ENCODE measurements at regions of chr5 and their contacts with region 1.

Region 1: GRCh38 chr5:170338933-170339779 is 41.6 kb upstream of the LCP2 start:
- DNase-seq: peak in 8 of 9 donors; percentile 53 to 75 (median 68)
- ATAC-seq: peak; percentile 90
- H3K4me3 ChIP-seq: no peak overlapping the region
- H3K4me3 Mint-ChIP-seq: peak overlapping the region in 3 of 10 donors; percentile 30 to 48 (median 42)
- H3K27ac ChIP-seq: peak overlapping the region; percentile 15
- H3K27ac Mint-ChIP-seq: peak overlapping the region in 8 of 9 donors; percentile 75 to 98 (median 86)
- H3K4me1 ChIP-seq: peaks cover 27 to 39% of the 10 kb centered on the region in 2 donors
- H3K4me1 Mint-ChIP-seq: peaks cover 0 to 48% (median 36%) of the 10 kb centered on the region in 7 donors
- H3K27me3 ChIP-seq: no peaks in the 10 kb centered on the region
- H3K27me3 Mint-ChIP-seq: peaks cover 0 to under 1% (median 0%) of the 10 kb centered on the region in 5 donors

Region 2: DNA sequence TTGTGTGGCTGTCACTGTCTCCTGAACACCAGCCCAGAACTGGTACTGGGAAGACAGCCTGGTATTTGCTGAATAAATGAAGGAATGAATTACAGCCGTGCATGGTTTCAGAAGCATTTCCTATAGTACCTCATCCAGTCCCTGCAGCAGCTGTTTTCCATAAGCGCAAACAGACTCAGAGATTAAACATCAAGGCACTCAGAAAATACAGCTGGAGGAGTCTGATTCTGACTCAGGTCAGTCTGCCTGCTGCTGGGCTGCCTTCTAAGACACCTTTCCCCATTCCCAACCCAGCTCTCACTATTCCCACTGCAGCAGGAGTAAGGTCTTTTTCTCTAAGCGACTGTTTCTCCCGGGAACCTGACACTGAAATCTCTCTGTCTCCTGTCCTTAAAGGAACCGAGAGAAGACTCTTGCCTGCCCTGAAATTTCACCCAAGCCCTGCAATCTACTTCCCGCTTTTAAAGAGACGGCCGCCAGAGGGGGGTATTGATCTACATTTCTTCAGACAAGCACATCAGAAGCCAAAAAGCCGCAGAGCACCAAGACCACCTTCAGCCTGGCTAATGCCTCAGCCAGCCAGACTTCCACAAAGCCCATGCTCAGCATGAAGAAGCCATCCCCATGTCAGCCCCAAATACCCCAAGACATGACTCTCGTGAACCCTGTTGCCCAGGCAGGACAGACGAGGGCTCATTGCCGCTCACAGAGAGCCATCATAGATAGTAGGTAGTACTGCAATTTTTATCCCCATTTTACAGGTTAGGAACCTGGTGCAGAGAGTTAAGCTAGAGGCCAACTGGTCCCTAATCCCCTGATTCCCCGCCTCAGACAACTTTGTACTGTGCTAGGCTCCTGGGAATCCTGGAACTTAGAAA is 238.9 kb before region 1 on chr5:
- CTCF ChIA-PET with region 1: interaction called, 5 read pairs
- POLR2A ChIA-PET with region 1: no interaction called
- intact Hi-C with region 1: loop called in 1 of 2 experiments (anchors 5 kb)
- DNase-seq: peak; percentile 38 to 67 (median 64)
- ATAC-seq: peak; percentile 65
- H3K4me3 ChIP-seq: no peak overlapping the region
- H3K4me3 Mint-ChIP-seq: no peak overlapping the region
- H3K27ac ChIP-seq: no peak overlapping the region
- H3K27ac Mint-ChIP-seq: peak overlapping the region in 2 of 9 donors; percentile 6 to 43
- H3K4me1 ChIP-seq: no peaks in the 10 kb centered on the region
- H3K4me1 Mint-ChIP-seq: peaks cover 0 to 10% (median 0%) of the 10 kb centered on the region in 7 donors
- H3K27me3 ChIP-seq: no peaks in the 10 kb centered on the region
- H3K27me3 Mint-ChIP-seq: peaks cover 3 to 16% (median 6%) of the 10 kb centered on the region in 5 donors

Region 3: DNA sequence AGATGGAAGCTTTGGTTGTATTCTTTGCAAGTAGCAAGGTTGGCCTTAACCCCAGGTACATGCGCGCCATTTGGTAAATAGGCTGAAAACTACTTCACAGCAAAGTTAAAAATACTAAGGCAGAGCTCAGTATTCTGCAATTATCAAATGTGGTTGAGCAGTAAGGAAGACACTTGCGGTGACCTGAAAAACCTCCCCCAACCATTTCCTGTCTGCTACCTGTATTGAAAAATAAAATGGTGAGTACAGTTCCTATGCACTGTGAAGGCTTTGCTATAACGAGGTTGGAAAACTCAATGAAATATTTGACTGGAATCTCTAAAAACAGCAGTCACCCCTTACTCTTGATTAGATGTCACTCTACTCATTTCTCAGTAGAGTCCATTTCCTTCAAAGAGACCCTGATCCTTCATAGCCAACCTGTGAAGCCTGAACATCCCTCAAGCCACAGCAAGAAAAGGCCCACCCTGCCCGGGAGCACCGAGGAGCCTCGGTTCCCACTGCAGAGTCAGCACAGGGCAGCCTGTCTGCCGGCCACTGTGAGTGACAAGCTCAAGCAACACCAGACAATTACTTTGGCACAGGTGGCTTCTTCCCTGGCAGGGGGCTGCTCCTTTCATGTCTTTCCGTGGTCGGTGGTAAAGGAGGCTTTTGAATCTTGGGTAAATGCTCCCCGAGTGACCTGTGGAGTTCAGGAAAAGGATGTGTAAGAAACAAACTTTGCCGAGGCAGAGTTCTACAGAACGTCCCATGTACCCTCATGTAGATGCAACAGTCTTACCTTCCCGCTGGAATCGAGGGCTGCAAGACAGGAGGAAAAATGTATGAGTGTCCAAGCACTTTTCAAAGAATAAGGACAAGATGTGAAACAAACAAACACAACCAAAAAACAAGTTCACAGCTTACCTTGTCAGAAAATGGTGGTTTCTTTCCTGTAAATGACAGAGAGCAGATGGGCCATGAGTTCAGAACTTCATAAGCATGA is 76.8 kb before region 1 on chr5:
- CTCF ChIA-PET with region 1: interaction called, 278 read pairs
- POLR2A ChIA-PET with region 1: interaction called, 45 read pairs
- intact Hi-C with region 1: no loop called
- DNase-seq: peak in 7 of 9 donors; percentile 78 to 89 (median 86)
- ATAC-seq: peak; percentile 90
- H3K4me3 ChIP-seq: peak overlapping the region; percentile 21
- H3K4me3 Mint-ChIP-seq: peak overlapping the region; percentile 64 to 87 (median 76)
- H3K27ac ChIP-seq: peak overlapping the region; percentile 74
- H3K27ac Mint-ChIP-seq: peak overlapping the region; percentile 89 to 99 (median 97)
- H3K4me1 ChIP-seq: peaks cover 49 to 72% of the 10 kb centered on the region in 2 donors
- H3K4me1 Mint-ChIP-seq: peaks cover 52 to 99% (median 96%) of the 10 kb centered on the region in 7 donors
- H3K27me3 ChIP-seq: no peaks in the 10 kb centered on the region
- H3K27me3 Mint-ChIP-seq: no peaks in the 10 kb centered on the region

Region 4: GRCh38 chr5:170287532-170287931 is 51.6 kb before region 1 on chr5:
- CTCF ChIA-PET with region 1: interaction called, 120 read pairs
- POLR2A ChIA-PET with region 1: interaction called, 391 read pairs
- intact Hi-C with region 1: no loop called
- DNase-seq: no peak
- ATAC-seq: peak; percentile 59
- H3K4me3 ChIP-seq: no peak overlapping the region
- H3K4me3 Mint-ChIP-seq: peak overlapping the region; percentile 57 to 100 (median 94)
- H3K27ac ChIP-seq: peak overlapping the region; percentile 75
- H3K27ac Mint-ChIP-seq: peak overlapping the region; percentile 57 to 98 (median 93)
- H3K4me1 ChIP-seq: peaks cover 97 to 98% of the 10 kb centered on the region in 2 donors
- H3K4me1 Mint-ChIP-seq: peaks cover 94 to 100% (median 100%) of the 10 kb centered on the region in 7 donors
- H3K27me3 ChIP-seq: no peaks in the 10 kb centered on the region
- H3K27me3 Mint-ChIP-seq: no peaks in the 10 kb centered on the region

Region 5: GRCh38 chr5:170312666-170313065 is 26.5 kb before region 1 on chr5:
- CTCF ChIA-PET with region 1: interaction called, 13 read pairs
- POLR2A ChIA-PET with region 1: interaction called, 23 read pairs
- intact Hi-C with region 1: no loop called
- DNase-seq: peak in 4 of 9 donors; percentile 27 to 85 (median 48)
- ATAC-seq: peak; percentile 87
- H3K4me3 ChIP-seq: peak overlapping the region; percentile 39
- H3K4me3 Mint-ChIP-seq: peak overlapping the region; percentile 66 to 83 (median 75)
- H3K27ac ChIP-seq: peak overlapping the region; percentile 69
- H3K27ac Mint-ChIP-seq: peak overlapping the region; percentile 58 to 97 (median 95)
- H3K4me1 ChIP-seq: peaks cover 29 to 50% of the 10 kb centered on the region in 2 donors
- H3K4me1 Mint-ChIP-seq: peaks cover 38 to 85% (median 70%) of the 10 kb centered on the region in 7 donors
- H3K27me3 ChIP-seq: no peaks in the 10 kb centered on the region
- H3K27me3 Mint-ChIP-seq: no peaks in the 10 kb centered on the region